IMR-90 (cell line): ENCODE measurements at regions of chr22 and their contacts with region 1.

Region 1: GRCh38 chr22:45842291-45842991 is 134.5 kb downstream of the WNT7B start:
- DNase-seq: peak; percentile 77
- ATAC-seq: no peak
- H3K4me3 ChIP-seq: no peak overlapping the region
- H3K27ac ChIP-seq: no peak overlapping the region
- H3K4me1 ChIP-seq: peaks cover 7% of the 10 kb centered on the region
- H3K27me3 ChIP-seq: no peaks in the 10 kb centered on the region
- CTCF ChIP-seq: no peak
- POLR2A ChIP-seq: no peak
- RAD21 ChIP-seq: no peak

Region 2: DNA sequence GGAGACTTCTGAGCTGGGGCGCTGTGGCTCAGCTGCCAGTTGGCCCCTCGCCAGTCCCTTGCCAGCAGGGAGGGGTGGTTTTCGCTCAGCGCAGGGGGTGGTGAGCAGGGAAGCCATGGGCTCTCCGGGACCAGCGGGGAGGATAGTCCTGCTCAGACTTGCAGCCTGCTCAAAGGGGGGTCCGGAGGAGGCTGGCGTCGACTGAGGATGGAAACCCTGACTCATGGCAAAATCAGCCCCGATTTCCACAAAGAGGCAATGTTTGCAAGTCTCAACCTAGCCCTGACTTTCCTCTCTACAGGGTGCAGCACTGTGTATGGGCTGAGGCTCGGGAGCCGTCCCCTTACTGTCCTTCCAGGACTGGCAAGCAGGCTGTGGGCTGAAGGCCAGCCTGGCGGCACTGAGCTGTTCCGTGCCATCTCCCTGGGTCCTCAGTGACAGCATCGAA is 304.7 kb before region 1 on chr22:
- CTCF ChIA-PET with region 1: no interaction called
- POLR2A ChIA-PET with region 1: no interaction called
- dilution Hi-C with region 1: no loop called
- in situ Hi-C with region 1: no loop called
- intact Hi-C with region 1: no loop called
- DNase-seq: peak; percentile 84
- ATAC-seq: peak; percentile 74
- H3K4me3 ChIP-seq: no peak overlapping the region
- H3K27ac ChIP-seq: peak overlapping the region; percentile 83
- H3K4me1 ChIP-seq: peaks cover 34% of the 10 kb centered on the region
- H3K27me3 ChIP-seq: no peaks in the 10 kb centered on the region
- CTCF ChIP-seq: no peak
- POLR2A ChIP-seq: no peak
- RAD21 ChIP-seq: no peak

Region 3: DNA sequence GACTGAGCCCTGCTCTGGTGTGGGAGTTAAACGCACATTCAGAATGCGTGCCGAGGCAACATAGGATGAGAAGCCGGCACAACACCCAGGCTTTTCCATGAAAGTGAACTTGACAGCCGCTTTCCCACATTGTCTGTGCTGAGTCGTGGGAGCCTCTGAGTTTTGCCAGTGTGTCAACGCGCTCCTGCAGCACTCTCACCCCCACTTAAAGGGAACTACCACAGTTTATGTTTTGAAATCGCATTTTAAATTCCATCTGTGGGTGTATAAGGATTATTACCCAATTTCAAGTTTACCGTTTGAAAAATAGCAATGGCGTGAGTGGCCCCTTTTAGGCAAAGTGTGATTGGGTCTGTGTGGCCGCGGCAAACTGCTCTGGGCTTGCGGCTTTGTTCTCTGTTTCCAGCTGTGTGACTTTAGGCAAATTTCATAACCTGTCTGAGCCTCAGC is 258.3 kb before region 1 on chr22:
- CTCF ChIA-PET with region 1: no interaction called
- POLR2A ChIA-PET with region 1: no interaction called
- dilution Hi-C with region 1: no loop called
- in situ Hi-C with region 1: no loop called
- intact Hi-C with region 1: loop called (anchors 10 kb)
- DNase-seq: peak; percentile 72
- ATAC-seq: peak; percentile 30
- H3K4me3 ChIP-seq: no peak overlapping the region
- H3K27ac ChIP-seq: no peak overlapping the region
- H3K4me1 ChIP-seq: peaks cover 22% of the 10 kb centered on the region
- H3K27me3 ChIP-seq: no peaks in the 10 kb centered on the region
- CTCF ChIP-seq: no peak
- POLR2A ChIP-seq: no peak
- RAD21 ChIP-seq: no peak

Region 4: GRCh38 chr22:45656577-45656976 is 185.9 kb before region 1 on chr22:
- CTCF ChIA-PET with region 1: no interaction called
- POLR2A ChIA-PET with region 1: no interaction called
- dilution Hi-C with region 1: no loop called
- in situ Hi-C with region 1: loop called (anchors 10 kb)
- intact Hi-C with region 1: loop called (anchors 5 kb)
- DNase-seq: peak; percentile 43
- ATAC-seq: peak; percentile 27; the same call in 1 of the 2 replicates
- H3K4me3 ChIP-seq: no peak overlapping the region
- H3K27ac ChIP-seq: no peak overlapping the region
- H3K4me1 ChIP-seq: peaks cover 6% of the 10 kb centered on the region; the same call in 1 of the 2 replicates
- H3K27me3 ChIP-seq: peaks cover 3% of the 10 kb centered on the region
- CTCF ChIP-seq: no peak
- POLR2A ChIP-seq: no peak
- RAD21 ChIP-seq: no peak

Region 5: GRCh38 chr22:45731798-45732495 is 110.5 kb before region 1 on chr22:
- CTCF ChIA-PET with region 1: interaction called, 3 read pairs
- POLR2A ChIA-PET with region 1: no interaction called
- dilution Hi-C with region 1: no loop called
- in situ Hi-C with region 1: no loop called
- intact Hi-C with region 1: loop called (anchors 5 kb)
- DNase-seq: peak; percentile 47
- ATAC-seq: peak; percentile 79
- H3K4me3 ChIP-seq: no peak overlapping the region
- H3K27ac ChIP-seq: 0 out of 2 replicates have a peak overlapping the region, but pooled peaks have one; percentile 9
- H3K4me1 ChIP-seq: peaks cover 6% of the 10 kb centered on the region
- H3K27me3 ChIP-seq: no peaks in the 10 kb centered on the region
- CTCF ChIP-seq: peak; percentile 53
- POLR2A ChIP-seq: no peak
- RAD21 ChIP-seq: peak; percentile 45